ENCODE measurements at regions of chr4 and their contacts with region 1.

Region 1: GRCh38 chr4:107814758-107815157 is 10.0 kb upstream of the SGMS2 start:
- DNase-seq: no peak
- ATAC-seq: no peak
- H3K4me3 ChIP-seq: no peak overlapping the region
- H3K27ac ChIP-seq: no peak overlapping the region
- H3K4me1 ChIP-seq: peaks cover 0 to 6% (median 0%) of the 10 kb centered on the region in 12 donors
- H3K27me3 ChIP-seq: no peaks in the 10 kb centered on the region
- CTCF ChIP-seq: no peak
- POLR2A ChIP-seq: no peak

Region 2: GRCh38 chr4:107774681-107775080 is 40.1 kb before region 1 on chr4:
- intact Hi-C with region 1: loop called in 1 of 10 experiments (anchors 5 kb)
- DNase-seq: no peak
- ATAC-seq: no peak
- H3K4me3 ChIP-seq: no peak overlapping the region
- H3K27ac ChIP-seq: no peak overlapping the region
- H3K4me1 ChIP-seq: no peaks in the 10 kb centered on the region
- H3K27me3 ChIP-seq: no peaks in the 10 kb centered on the region
- CTCF ChIP-seq: no peak
- POLR2A ChIP-seq: no peak

Measured in heart left ventricle (tissue), 16 donors.